ENCODE measurements at regions of chr2 and their contacts with region 1.

Region 1: GRCh38 chr2:186503848-186504606 is 18.0 kb downstream of the ZC3H15 start:
- DNase-seq: no peak
- ATAC-seq: no peak
- H3K4me3 Mint-ChIP-seq: no peak overlapping the region
- H3K27ac Mint-ChIP-seq: no peak overlapping the region
- H3K4me1 Mint-ChIP-seq: no peaks in the 10 kb centered on the region
- H3K27me3 Mint-ChIP-seq: no peaks in the 10 kb centered on the region
- CTCF ChIP-seq: peak; percentile 55

Region 2: DNA sequence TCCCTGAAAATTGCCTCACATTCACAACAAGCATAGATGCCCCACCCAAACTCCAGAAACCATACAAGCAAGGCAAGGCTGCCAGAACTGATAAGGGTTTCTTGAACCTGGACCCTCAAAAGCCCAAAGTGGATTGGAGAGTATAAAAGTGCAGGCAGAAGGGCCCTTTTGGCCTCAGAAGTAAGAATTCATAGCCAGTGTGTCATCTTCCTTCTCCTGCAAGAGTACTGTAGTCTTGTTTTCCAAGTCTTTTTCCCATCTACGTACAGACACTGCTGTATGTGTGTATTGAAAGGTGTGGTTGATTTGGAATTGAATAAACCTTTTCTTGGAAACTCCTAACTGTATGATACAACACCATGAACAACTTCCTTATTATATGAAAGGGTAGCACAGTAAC is 28.9 kb after region 1 on chr2:
- CTCF ChIA-PET with region 1: no interaction called
- POLR2A ChIA-PET with region 1: no interaction called
- DNase-seq: no peak
- ATAC-seq: no peak
- H3K4me3 Mint-ChIP-seq: no peak overlapping the region
- H3K27ac Mint-ChIP-seq: no peak overlapping the region
- H3K4me1 Mint-ChIP-seq: no peaks in the 10 kb centered on the region
- H3K27me3 Mint-ChIP-seq: no peaks in the 10 kb centered on the region; the same call in 1 of the 2 replicates
- CTCF ChIP-seq: no peak

Region 3: GRCh38 chr2:186641807-186642321 is 137.8 kb after region 1 on chr2:
- CTCF ChIA-PET with region 1: interaction called, 17 read pairs
- POLR2A ChIA-PET with region 1: no interaction called
- DNase-seq: no peak
- ATAC-seq: peak; percentile 89
- H3K4me3 Mint-ChIP-seq: no peak overlapping the region
- H3K27ac Mint-ChIP-seq: no peak overlapping the region
- H3K4me1 Mint-ChIP-seq: peaks cover 10% of the 10 kb centered on the region
- H3K27me3 Mint-ChIP-seq: no peaks in the 10 kb centered on the region
- CTCF ChIP-seq: 0 out of 2 replicates have a peak, but pooled peaks have one; percentile 25

Measured in WTC11 (cell line).